A549 (cell line): ENCODE measurements at regions of chr1 and their contacts with region 1.

Region 1: DNA sequence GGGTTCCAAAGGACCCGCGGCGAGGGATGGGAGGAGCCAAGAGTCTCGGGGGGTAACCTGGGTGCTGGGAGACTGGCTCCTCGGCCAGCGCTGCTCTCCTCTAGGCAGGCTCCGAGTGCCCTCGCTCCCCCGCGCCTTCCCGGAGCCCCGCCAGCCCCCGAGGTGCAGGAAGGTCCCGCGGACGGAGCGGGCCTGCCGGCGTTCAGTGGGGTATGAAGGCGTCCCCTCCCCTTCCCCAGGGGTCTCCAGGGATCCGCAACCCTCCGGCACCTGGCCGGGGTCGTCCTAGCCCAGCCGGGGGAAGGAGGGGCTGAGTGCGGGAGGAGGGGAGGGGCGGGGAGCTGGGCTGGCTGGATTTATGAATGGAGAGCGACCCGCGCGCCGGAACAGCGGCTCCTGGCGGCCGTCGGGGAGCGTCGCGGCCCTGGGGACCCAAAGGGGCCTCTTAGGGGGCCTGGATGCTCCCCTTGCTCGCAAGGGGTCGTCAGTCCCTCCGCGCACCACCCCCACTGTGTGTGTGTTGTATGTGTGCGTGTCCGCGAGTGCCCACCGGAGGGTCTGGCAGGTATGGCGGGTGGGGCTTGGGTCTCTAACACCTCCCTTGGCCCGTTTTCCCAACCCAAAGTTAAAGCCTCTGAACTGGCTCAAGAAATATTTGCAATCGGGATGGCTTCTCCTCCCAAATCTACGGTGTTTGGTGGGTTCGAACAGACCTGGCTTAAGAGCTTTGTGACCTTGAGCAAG is 600 bp downstream of the HCRTR1 start:
- DNase-seq: peak; percentile 27 to 51
- ATAC-seq: peak; percentile 80 to 92
- H3K4me3 ChIP-seq: peak overlapping the region; percentile 83
- H3K27ac ChIP-seq: peak overlapping the region; percentile 68 to 91; a peak in 5 of 6 replicates
- H3K4me1 ChIP-seq: no peaks in the 10 kb centered on the region
- CTCF ChIP-seq: peak; percentile 70
- EP300 ChIP-seq: no peak
- POLR2A ChIP-seq: no peak
- RAD21 ChIP-seq: peak; percentile 41 to 55; a peak in 4 of 5 replicates

Region 2: DNA sequence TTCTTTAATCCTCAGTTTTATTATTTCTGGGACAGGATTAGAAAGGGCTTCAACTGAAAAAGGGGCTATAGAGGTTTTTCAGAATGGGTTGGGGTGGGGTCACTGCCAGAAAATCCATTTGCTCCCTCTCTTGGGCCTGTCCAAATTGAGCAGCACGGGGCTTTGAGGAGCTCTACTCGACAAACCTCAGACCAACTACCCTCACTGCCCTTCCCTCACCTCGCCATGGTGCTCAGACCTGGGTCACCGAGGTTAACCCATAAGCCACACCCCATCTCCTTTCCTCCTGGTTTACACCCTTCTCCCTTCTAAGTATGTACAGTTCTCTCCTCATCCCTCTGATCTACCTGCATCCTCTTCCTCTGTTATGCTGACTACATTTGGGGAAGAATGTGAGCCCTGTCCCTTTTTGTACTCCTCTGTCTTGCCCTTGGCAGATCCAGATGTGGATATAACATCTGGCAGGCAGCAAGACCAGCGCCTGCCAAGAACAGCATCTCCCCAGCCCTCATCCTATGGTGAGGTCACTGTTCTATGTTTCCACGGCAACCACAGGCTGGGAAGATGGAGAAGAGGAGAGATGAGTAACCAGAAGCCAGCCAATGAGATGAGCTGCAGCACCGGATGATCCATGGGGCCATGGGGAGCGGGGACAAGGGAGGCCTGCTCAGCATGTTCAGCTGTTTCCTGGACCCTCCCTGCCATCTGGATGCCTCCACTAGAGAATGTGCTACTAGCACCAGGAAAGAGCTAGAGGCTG is 241.5 kb before region 1 on chr1:
- CTCF ChIA-PET with region 1: no interaction called
- POLR2A ChIA-PET with region 1: no interaction called
- DNase-seq: peak; percentile 39 to 47
- ATAC-seq: peak; percentile 53 to 64; a peak in 4 of 6 replicates
- H3K4me3 ChIP-seq: no peak overlapping the region
- H3K27ac ChIP-seq: no peak overlapping the region
- H3K4me1 ChIP-seq: peaks cover 13% of the 10 kb centered on the region
- CTCF ChIP-seq: no peak
- EP300 ChIP-seq: no peak
- POLR2A ChIP-seq: no peak
- RAD21 ChIP-seq: no peak

Region 3: DNA sequence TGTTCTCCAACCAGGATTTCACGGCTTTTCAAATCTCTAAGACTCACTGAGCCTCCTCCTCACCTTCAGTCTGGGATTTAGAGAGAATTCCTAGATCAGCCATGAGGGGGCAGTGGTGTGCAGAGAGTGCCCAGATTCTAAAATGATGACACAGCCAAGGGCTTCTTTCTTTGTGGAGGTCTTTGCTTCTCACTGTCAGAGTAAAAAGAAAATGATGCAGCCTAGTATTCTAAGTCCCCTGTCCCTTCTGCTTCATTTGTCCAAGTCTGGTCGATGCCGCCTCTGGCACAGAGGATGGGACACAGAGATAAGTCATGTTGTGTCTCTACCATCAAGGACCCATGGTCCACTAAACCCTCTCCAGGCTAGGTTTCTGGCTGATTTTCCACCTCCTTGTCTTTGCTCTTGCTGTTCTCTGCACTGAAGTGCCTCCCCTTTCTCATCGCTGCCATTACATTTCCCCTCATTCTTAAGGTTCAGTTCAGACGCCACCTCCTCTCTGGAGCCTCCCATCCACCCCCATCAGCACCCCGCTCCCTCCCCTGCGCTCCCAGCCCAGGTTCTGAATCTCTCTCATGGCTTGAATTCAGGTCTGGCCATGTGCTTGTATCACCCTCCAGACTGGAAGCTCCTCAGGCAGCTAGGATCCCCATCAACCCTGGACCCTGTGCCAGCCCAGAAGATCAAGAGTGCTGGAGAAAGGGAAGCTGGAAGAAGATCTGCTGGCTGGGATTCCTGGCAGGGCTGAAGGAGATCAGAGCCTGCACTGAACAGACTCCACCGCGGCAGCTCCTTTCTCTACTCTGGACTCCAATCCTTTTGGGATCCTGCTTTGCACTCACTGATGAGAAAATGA is 53.7 kb before region 1 on chr1:
- CTCF ChIA-PET with region 1: interaction called, 27 read pairs
- POLR2A ChIA-PET with region 1: no interaction called
- DNase-seq: peak; percentile 44 to 62
- ATAC-seq: peak; percentile 88 to 90
- H3K4me3 ChIP-seq: no peak overlapping the region
- H3K27ac ChIP-seq: peak overlapping the region in 1 of 2 experiments; percentile 51; a peak in 1 of 6 replicates
- H3K4me1 ChIP-seq: peaks cover 25% of the 10 kb centered on the region
- CTCF ChIP-seq: peak; percentile 81
- EP300 ChIP-seq: no peak
- POLR2A ChIP-seq: no peak
- RAD21 ChIP-seq: peak; percentile 88 to 92

Region 4: GRCh38 chr1:31576201-31576669 is 41.9 kb before region 1 on chr1 and contains the start of gene TINAGL1:
- CTCF ChIA-PET with region 1: interaction called, 14 read pairs
- POLR2A ChIA-PET with region 1: no interaction called
- DNase-seq: no peak
- ATAC-seq: no peak
- H3K4me3 ChIP-seq: no peak within 1 kb of the TSS
- H3K27ac ChIP-seq: peak within 1 kb of the TSS; percentile 60 to 81; a peak in 5 of 6 replicates
- H3K4me1 ChIP-seq: peaks cover 66% of the 10 kb centered on the region
- CTCF ChIP-seq: no peak
- EP300 ChIP-seq: no peak
- POLR2A ChIP-seq: no peak
- RAD21 ChIP-seq: no peak
- polyA plus RNA-seq, gene TINAGL1: 0.09 and 0.22 TPM in 2 replicates

Region 5: GRCh38 chr1:31588395-31589285 is 29.4 kb before region 1 on chr1:
- CTCF ChIA-PET with region 1: interaction called, 13 read pairs
- POLR2A ChIA-PET with region 1: no interaction called
- DNase-seq: no peak
- ATAC-seq: no peak
- H3K4me3 ChIP-seq: no peak overlapping the region
- H3K27ac ChIP-seq: peak overlapping the region in 1 of 2 experiments; percentile 76; a peak in 2 of 6 replicates
- H3K4me1 ChIP-seq: peaks cover 29% of the 10 kb centered on the region
- CTCF ChIP-seq: no peak
- EP300 ChIP-seq: no peak
- POLR2A ChIP-seq: no peak
- RAD21 ChIP-seq: no peak

Region 6: GRCh38 chr1:31593770-31594632 is 24.1 kb before region 1 on chr1:
- CTCF ChIA-PET with region 1: interaction called, 13 read pairs
- POLR2A ChIA-PET with region 1: no interaction called
- DNase-seq: peak; percentile 67 to 70
- ATAC-seq: peak; percentile 94 to 98
- H3K4me3 ChIP-seq: no peak overlapping the region
- H3K27ac ChIP-seq: no peak overlapping the region
- H3K4me1 ChIP-seq: peaks cover 12% of the 10 kb centered on the region; the same call in 2 of the 3 replicates
- CTCF ChIP-seq: peak; percentile 79
- EP300 ChIP-seq: no peak
- POLR2A ChIP-seq: no peak
- RAD21 ChIP-seq: peak; percentile 80 to 87

Region 7: DNA sequence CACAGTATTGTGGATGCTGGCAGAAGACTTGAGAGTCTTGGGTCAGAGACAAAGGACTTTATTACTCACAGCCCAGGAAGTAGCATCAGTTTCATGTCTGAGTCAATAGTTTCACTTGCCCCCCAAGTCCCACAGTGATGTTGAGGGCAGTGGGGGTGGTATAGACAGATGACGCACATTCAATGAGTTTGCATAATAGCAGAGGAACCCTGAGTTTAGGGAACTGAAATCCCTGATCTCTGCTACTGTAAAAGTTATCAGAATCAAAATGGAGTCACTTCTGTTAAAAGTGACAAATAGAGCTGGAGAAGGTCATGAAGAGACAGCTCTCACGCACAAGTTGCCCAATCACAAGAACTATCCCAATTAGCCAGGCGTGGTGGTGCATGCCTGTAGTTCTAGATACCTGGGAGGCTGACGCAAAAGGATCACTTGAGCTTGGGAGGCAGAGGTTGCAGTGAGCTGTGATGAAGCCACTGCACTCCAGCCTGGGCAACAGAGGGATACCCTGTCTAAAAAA is 12.1 kb before region 1 on chr1:
- CTCF ChIA-PET with region 1: interaction called, 13 read pairs
- POLR2A ChIA-PET with region 1: no interaction called
- DNase-seq: no peak
- ATAC-seq: no peak
- H3K4me3 ChIP-seq: no peak overlapping the region
- H3K27ac ChIP-seq: no peak overlapping the region
- H3K4me1 ChIP-seq: no peaks in the 10 kb centered on the region
- CTCF ChIP-seq: no peak
- EP300 ChIP-seq: no peak
- POLR2A ChIP-seq: no peak
- RAD21 ChIP-seq: no peak